Activated CD4-positive, alpha-beta memory T cell treated with anti-CD3 and anti-CD28 coated beads for 36 hours (primary cell): ENCODE measurements at regions of chr22 and their contacts with region 1.

Region 1: DNA sequence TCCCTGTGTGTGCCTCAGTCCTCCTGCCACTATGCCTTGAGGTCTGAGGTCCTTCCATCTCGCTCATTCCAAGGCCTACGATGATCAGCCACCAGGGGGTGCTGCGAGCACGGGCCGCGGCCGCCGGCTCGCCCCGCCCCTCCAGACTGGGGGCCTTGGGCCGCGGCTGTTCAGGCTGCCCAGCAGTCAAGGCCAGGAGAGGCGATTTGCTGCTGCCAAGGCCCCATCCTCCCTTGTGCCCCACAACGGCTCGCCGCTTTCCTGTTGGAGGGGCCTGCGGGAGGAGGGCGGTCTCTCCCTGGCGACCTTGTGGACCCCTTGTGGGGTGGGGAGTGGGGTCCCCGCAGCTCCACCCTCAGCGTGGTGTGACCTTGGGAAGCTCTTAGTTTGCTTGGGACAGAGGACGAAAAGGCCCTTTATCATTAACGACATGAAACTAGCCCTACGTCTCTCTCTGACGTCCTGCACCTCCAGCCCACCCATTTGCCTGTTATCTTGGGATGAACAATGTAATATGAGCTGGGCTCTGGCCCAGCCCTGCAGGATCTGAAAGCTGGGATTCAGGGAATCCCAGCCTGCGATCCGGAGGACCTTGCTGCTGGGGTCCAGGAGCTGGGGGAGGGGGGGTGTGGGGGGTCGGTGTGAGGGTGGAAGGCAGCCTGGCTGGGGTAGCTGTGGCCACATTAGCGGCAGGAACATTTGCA is 5.3 kb upstream of the GALR3 start:
- DNase-seq: peak; percentile 87
- H3K4me3 Mint-ChIP-seq: no peak overlapping the region
- H3K27ac Mint-ChIP-seq: no peak overlapping the region
- H3K4me1 Mint-ChIP-seq: peaks cover 11% of the 10 kb centered on the region
- H3K27me3 Mint-ChIP-seq: peaks cover 7% of the 10 kb centered on the region

Region 2: DNA sequence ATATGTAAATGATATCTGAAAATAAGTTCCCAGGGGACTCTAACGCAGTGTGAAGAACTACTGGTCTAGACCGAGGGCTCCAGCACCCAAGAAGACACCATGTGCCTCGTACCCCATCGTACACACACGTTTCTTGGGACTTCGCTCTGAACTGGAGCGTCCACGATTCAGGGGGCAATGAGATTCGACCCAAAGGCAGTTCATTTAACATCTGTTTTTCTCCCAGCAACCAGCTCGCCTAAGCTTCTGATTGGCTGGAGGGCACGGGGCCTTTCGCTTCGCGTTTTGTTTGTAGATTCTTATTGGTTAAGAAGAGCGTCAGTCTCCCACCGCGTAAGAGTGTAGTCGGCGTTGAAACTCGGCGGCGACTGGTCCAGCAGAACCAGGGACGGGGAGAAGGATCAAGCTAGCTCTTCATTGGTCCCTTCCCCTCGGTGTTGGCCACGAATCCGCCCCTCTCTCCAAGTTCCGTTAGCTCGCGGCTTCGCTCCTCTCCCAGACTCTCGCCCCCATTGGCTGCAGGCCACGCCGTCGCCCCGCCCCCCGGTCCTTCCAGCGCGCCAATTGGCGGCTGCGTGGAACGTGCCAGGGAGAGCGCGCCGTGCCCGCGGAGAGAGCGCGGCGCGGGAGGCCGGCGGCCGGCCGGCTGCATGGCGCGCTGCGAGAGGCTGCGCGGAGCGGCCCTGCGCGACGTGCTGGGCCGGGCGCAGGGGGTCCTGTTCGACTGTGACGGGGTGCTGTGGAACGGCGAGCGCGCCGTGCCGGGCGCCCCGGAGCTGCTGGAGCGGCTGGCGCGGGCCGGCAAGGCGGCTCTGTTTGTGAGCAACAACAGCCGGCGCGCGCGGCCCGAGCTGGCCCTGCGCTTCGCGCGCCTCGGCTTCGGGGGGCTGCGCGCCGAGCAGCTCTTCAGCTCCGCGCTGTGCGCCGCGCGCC is 159.5 kb before region 1 on chr22 and contains the start of gene PDXP:
- CTCF ChIA-PET with region 1: no interaction called
- POLR2A ChIA-PET with region 1: no interaction called
- intact Hi-C with region 1: no loop called
- DNase-seq: peak; percentile 98
- H3K4me3 Mint-ChIP-seq: peak within 1 kb of the TSS; percentile 87
- H3K27ac Mint-ChIP-seq: peak within 1 kb of the TSS; percentile 72
- H3K4me1 Mint-ChIP-seq: peaks cover 31% of the 10 kb centered on the region
- H3K27me3 Mint-ChIP-seq: no peaks in the 10 kb centered on the region
- total RNA-seq, gene PDXP: 21.9 to 22.9 TPM

Region 3: GRCh38 chr22:37832022-37832857 is 14.4 kb after region 1 on chr22:
- CTCF ChIA-PET with region 1: interaction called, 21 read pairs
- POLR2A ChIA-PET with region 1: no interaction called
- intact Hi-C with region 1: no loop called
- DNase-seq: no peak
- H3K4me3 Mint-ChIP-seq: no peak overlapping the region
- H3K27ac Mint-ChIP-seq: no peak overlapping the region
- H3K4me1 Mint-ChIP-seq: no peaks in the 10 kb centered on the region
- H3K27me3 Mint-ChIP-seq: no peaks in the 10 kb centered on the region

Region 4: GRCh38 chr22:37849089-37849751 is 31.4 kb after region 1 on chr22 and contains the start of gene EIF3L:
- CTCF ChIA-PET with region 1: interaction called, 25 read pairs
- POLR2A ChIA-PET with region 1: interaction called, 6 read pairs
- intact Hi-C with region 1: no loop called
- DNase-seq: peak; percentile 94
- H3K4me3 Mint-ChIP-seq: peak within 1 kb of the TSS; percentile 91
- H3K27ac Mint-ChIP-seq: peak within 1 kb of the TSS; percentile 93
- H3K4me1 Mint-ChIP-seq: peaks cover 45% of the 10 kb centered on the region
- H3K27me3 Mint-ChIP-seq: no peaks in the 10 kb centered on the region
- total RNA-seq, gene EIF3L: 656 to 664 TPM

Region 5: DNA sequence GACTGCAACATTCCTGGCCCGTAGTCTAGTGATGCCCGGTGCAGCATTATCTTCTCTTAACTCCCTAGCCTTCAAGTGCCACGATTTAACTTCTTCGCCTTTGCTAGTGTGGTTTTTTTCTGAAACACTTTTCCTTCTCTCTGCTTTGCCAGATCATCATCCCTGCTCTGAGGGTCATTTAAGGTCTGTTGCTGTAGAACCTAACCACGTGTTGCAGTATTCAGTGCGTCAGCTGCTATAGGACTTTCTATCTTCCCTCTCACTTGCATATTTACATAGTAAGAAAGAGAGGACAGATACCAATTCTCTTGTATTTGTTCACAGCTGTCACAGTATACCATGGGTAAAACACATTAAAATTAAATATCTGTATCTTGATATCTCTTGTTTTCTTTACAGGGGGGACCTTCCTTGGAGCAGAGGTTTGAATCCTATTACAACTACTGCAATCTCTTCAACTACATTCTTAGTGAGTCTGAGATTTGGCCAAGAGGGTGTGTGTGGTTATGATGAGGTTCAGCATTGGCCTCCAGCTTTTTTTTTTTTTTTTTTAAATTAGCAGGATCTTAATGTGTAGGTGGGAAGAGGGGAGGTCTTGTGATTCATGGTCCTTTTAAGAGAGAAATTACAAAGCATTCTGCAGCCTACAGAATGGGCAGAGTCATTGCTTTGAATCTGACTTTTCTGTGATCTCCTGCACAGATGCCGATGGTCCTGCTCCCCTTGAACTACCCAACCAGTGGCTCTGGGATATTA is 44.9 kb after region 1 on chr22:
- CTCF ChIA-PET with region 1: interaction called, 124 read pairs
- POLR2A ChIA-PET with region 1: interaction called, 5 read pairs
- intact Hi-C with region 1: loop called (anchors 1 kb)
- DNase-seq: no peak
- H3K4me3 Mint-ChIP-seq: no peak overlapping the region
- H3K27ac Mint-ChIP-seq: no peak overlapping the region
- H3K4me1 Mint-ChIP-seq: peaks cover 12% of the 10 kb centered on the region
- H3K27me3 Mint-ChIP-seq: no peaks in the 10 kb centered on the region

Region 6: GRCh38 chr22:37953437-37954179 is 135.8 kb after region 1 on chr22 and contains the starts of genes C22orf23 and POLR2F:
- CTCF ChIA-PET with region 1: interaction called, 12 read pairs
- POLR2A ChIA-PET with region 1: interaction called, 3 read pairs
- intact Hi-C with region 1: no loop called
- DNase-seq: peak; percentile 98
- H3K4me3 Mint-ChIP-seq: peak within 1 kb of the TSS; percentile 99
- H3K27ac Mint-ChIP-seq: peak within 1 kb of the TSS; percentile 79
- H3K4me1 Mint-ChIP-seq: peaks cover 34% of the 10 kb centered on the region
- H3K27me3 Mint-ChIP-seq: peaks cover 9% of the 10 kb centered on the region
- total RNA-seq, gene C22orf23: 0.14 TPM in 1 of 2 experiments, not detected in the other
- total RNA-seq, gene POLR2F: 67.7 to 74.9 TPM

Region 7: DNA sequence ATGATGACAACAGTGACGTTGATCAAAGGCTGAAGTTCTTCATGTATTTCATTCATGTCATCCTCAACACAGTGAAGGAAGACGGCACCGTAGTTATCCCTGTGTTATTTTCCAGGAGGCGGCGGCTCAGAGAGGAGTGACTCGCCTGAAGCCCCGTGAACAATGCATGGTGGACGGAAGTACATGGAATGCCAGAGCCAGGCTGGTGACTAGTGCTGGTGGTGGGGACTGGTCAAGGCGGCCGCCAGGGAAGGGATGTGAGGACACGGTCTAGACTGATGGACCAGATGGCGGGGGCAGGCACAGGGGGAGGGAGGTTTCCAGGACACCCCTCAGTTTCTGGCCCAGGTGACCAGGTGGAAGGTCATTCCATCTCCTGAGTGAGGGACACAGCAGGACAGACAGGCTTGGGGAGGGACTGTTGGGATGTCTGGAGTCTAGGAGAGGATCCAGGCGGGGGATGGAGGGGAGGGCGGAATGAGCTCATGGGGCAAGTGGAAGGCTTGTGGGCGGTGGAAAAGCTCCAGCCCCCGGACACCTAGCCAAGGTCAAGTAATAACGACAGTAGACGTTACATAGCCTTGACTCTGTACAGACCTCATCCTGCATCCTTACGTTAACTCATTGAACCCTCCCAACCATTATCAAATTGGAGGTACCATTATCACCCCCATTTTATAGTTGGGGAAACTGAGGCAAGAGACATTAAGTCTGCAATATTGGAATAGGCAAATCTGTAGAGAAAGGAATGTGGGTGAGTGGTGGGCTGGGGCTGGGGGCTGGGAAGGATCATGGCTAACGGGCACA is 223.3 kb after region 1 on chr22:
- CTCF ChIA-PET with region 1: no interaction called
- POLR2A ChIA-PET with region 1: no interaction called
- intact Hi-C with region 1: no loop called
- DNase-seq: no peak
- H3K4me3 Mint-ChIP-seq: no peak overlapping the region
- H3K27ac Mint-ChIP-seq: no peak overlapping the region
- H3K4me1 Mint-ChIP-seq: no peaks in the 10 kb centered on the region
- H3K27me3 Mint-ChIP-seq: no peaks in the 10 kb centered on the region